IMR-90 (cell line): ENCODE measurements at regions of chr12 and their contacts with region 1.

Region 1: GRCh38 chr12:97308576-97309198 is 153.9 kb upstream of the RMST start:
- DNase-seq: peak; percentile 65
- ATAC-seq: peak; percentile 44; the same call in 1 of the 2 replicates
- H3K4me3 ChIP-seq: no peak overlapping the region
- H3K27ac ChIP-seq: no peak overlapping the region
- H3K4me1 ChIP-seq: no peaks in the 10 kb centered on the region
- H3K27me3 ChIP-seq: no peaks in the 10 kb centered on the region
- CTCF ChIP-seq: peak; percentile 65
- POLR2A ChIP-seq: no peak
- RAD21 ChIP-seq: peak; percentile 55

Region 2: GRCh38 chr12:96578526-96579125 is 730.1 kb before region 1 on chr12:
- CTCF ChIA-PET with region 1: no interaction called
- POLR2A ChIA-PET with region 1: no interaction called
- dilution Hi-C with region 1: no loop called
- in situ Hi-C with region 1: loop called (anchors 10 kb)
- intact Hi-C with region 1: loop called (anchors 1 kb)
- DNase-seq: peak; percentile 64
- ATAC-seq: peak; percentile 88
- H3K4me3 ChIP-seq: no peak overlapping the region
- H3K27ac ChIP-seq: no peak overlapping the region
- H3K4me1 ChIP-seq: no peaks in the 10 kb centered on the region
- H3K27me3 ChIP-seq: no peaks in the 10 kb centered on the region
- CTCF ChIP-seq: peak; percentile 80
- POLR2A ChIP-seq: no peak
- RAD21 ChIP-seq: peak; percentile 85

Region 3: DNA sequence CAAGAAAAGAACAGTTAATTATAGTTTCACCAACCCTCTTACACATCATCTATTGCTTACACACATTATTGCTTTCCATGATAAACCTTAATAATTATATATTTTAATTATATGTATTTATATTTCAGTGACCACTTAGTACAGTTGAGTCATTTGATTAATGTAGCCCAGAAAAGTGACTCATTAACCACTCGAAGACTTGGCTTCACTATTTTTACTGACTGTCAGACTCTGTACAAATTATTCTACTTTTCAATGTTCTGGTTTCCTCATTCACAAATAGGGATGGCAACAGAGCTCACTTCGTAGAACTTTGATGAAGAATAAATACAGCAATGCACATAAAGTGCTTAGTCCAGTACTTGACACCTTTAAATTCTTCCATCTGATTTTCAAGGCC is 721.0 kb before region 1 on chr12:
- CTCF ChIA-PET with region 1: no interaction called
- POLR2A ChIA-PET with region 1: no interaction called
- dilution Hi-C with region 1: no loop called
- in situ Hi-C with region 1: loop called (anchors 10 kb)
- intact Hi-C with region 1: no loop called
- DNase-seq: peak; percentile 22
- ATAC-seq: no peak
- H3K4me3 ChIP-seq: no peak overlapping the region
- H3K27ac ChIP-seq: no peak overlapping the region
- H3K4me1 ChIP-seq: no peaks in the 10 kb centered on the region
- H3K27me3 ChIP-seq: no peaks in the 10 kb centered on the region
- CTCF ChIP-seq: no peak
- POLR2A ChIP-seq: no peak
- RAD21 ChIP-seq: no peak

Region 4: DNA sequence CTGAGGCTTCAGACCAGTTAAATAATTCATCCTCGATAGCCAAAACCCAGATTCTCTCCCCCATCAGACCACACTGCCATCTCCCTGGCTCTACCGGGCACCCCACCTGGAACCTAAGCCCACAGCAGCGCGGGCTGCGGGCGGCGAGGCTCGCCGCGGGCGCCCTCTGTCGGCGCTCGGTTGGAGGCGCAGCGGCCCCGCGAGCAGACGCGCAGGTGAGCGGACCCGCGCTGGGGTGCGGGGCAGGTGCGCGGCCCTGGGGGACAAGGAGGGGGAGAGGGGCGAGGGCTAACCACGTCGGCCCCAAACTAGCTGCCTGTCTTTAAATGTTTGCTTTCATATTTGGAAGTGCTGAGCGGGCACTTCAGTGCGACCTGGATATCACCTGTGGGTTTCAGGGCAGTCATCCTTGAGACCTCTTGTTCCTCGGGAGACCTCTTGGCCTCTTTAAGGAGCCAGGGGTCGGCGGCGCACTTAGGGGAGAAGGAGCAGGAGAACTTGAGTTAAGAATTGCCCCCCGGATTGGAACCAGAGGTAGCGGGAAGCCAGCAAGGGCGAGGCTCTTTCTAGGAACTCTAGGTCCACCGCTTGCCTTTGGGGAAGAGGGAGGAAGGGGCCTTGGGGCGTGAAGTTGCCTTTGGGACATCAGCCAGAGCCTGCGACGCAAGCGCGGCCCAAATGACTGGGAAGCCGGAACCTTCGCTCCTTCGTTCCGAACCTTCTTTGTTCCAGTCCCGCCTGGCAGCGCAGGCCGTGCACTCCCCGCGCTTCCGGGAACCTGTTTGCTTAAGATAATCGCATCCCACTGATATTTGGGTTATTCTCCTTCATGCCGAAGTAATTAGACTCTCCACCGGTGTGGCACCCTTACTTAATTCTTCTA is 323.0 kb before region 1 on chr12:
- CTCF ChIA-PET with region 1: interaction called, 6 read pairs
- POLR2A ChIA-PET with region 1: no interaction called
- dilution Hi-C with region 1: no loop called
- in situ Hi-C with region 1: loop called (anchors 5 kb)
- intact Hi-C with region 1: loop called (anchors 1 kb)
- DNase-seq: no peak
- ATAC-seq: peak; percentile 75
- H3K4me3 ChIP-seq: peak overlapping the region; percentile 10
- H3K27ac ChIP-seq: no peak overlapping the region
- H3K4me1 ChIP-seq: no peaks in the 10 kb centered on the region
- H3K27me3 ChIP-seq: peaks cover 10% of the 10 kb centered on the region
- CTCF ChIP-seq: peak; percentile 64
- POLR2A ChIP-seq: no peak
- RAD21 ChIP-seq: peak; percentile 63

Region 5: DNA sequence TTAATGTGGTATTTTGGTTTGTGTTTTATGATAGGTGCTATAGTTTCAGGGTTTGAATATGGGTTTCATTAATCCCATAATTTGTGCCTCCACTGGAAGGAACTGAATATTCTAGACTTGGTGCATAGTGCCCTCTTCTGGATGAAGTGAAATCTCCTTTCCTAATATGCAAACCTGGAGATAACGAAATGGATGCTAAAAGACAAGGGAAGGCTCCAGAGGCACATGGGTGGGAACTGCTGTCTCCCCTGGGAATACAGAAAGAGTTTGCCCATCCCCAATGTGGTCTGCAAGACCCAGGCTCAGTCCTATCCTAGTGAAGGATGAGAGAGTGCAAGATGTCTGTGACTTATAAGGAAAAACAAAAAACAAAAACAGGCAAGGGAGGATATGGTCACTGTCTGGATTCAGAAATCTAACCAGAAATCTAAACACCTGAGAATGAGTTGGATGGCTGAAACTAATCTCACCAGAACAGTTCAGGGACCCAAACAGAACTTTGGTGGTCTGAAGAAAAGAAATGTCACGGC is 1064.4 kb after region 1 on chr12:
- CTCF ChIA-PET with region 1: no interaction called
- POLR2A ChIA-PET with region 1: no interaction called
- dilution Hi-C with region 1: no loop called
- in situ Hi-C with region 1: loop called (anchors 25 kb)
- intact Hi-C with region 1: loop called (anchors 5 kb)
- DNase-seq: peak; percentile 51
- ATAC-seq: peak; percentile 64; the same call in 1 of the 2 replicates
- H3K4me3 ChIP-seq: no peak overlapping the region
- H3K27ac ChIP-seq: no peak overlapping the region
- H3K4me1 ChIP-seq: no peaks in the 10 kb centered on the region
- H3K27me3 ChIP-seq: peaks cover 4% of the 10 kb centered on the region
- CTCF ChIP-seq: peak; percentile 75
- POLR2A ChIP-seq: no peak
- RAD21 ChIP-seq: peak; percentile 84

Region 6: GRCh38 chr12:98397316-98398105 is 1088.8 kb after region 1 on chr12:
- CTCF ChIA-PET with region 1: no interaction called
- POLR2A ChIA-PET with region 1: no interaction called
- dilution Hi-C with region 1: no loop called
- in situ Hi-C with region 1: loop called (anchors 25 kb)
- intact Hi-C with region 1: no loop called
- DNase-seq: peak; percentile 71
- ATAC-seq: peak; percentile 98
- H3K4me3 ChIP-seq: peak overlapping the region; percentile 32
- H3K27ac ChIP-seq: no peak overlapping the region
- H3K4me1 ChIP-seq: peaks cover 4% of the 10 kb centered on the region; the same call in 1 of the 2 replicates
- H3K27me3 ChIP-seq: no peaks in the 10 kb centered on the region
- CTCF ChIP-seq: peak; percentile 87
- POLR2A ChIP-seq: no peak; the same call in 1 of the 2 replicates
- RAD21 ChIP-seq: peak; percentile 88